ENCODE measurements at regions of chr11 and their contacts with region 1.

Region 1: GRCh38 chr11:72430741-72431570 is 3.4 kb downstream of the CLPB start:
- DNase-seq: peak; percentile 32
- H3K4me3 Mint-ChIP-seq: no peak overlapping the region
- H3K27ac Mint-ChIP-seq: peak overlapping the region; percentile 14
- H3K4me1 Mint-ChIP-seq: peaks cover 40% of the 10 kb centered on the region
- H3K27me3 Mint-ChIP-seq: no peaks in the 10 kb centered on the region

Region 2: DNA sequence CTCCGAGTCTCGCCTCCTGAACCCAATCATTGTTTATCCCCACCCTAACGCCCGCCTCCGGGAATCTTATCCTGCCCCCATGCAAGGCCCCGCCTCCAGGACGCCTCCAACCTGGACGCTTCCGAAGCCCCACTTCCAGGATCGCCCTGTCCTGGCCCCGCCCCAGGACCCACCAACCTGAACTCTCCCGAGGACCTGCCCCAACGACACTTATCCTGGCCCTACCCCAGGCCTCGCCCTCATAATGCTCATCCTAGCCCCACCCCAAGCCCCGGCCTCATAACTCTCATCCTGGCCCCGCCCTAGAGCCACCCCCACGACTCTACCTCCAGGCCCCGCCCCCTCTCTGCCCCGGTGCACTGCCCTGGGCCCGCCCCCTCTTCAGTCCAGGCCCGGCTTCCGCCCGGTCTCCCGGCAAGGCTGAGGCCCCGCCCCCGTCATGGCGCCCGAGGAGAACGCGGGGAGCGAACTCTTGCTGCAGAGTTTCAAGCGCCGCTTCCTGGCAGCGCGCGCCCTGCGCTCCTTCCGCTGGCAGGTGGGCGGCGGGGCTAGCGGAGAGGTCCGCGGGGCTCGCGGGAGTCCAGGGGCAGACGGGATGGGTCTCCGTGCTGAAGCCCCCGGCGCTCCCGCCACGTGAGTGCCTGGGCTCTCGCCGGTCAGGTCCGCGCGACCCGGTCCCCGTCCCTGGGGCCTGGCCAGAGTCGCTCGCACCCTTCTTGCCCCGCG is 643.7 kb before region 1 on chr11:
- intact Hi-C with region 1: loop called (anchors 1 kb)
- DNase-seq: peak; percentile 91
- H3K4me3 Mint-ChIP-seq: peak overlapping the region; percentile 97
- H3K27ac Mint-ChIP-seq: peak overlapping the region; percentile 97
- H3K4me1 Mint-ChIP-seq: peaks cover 23% of the 10 kb centered on the region
- H3K27me3 Mint-ChIP-seq: no peaks in the 10 kb centered on the region

Region 3: DNA sequence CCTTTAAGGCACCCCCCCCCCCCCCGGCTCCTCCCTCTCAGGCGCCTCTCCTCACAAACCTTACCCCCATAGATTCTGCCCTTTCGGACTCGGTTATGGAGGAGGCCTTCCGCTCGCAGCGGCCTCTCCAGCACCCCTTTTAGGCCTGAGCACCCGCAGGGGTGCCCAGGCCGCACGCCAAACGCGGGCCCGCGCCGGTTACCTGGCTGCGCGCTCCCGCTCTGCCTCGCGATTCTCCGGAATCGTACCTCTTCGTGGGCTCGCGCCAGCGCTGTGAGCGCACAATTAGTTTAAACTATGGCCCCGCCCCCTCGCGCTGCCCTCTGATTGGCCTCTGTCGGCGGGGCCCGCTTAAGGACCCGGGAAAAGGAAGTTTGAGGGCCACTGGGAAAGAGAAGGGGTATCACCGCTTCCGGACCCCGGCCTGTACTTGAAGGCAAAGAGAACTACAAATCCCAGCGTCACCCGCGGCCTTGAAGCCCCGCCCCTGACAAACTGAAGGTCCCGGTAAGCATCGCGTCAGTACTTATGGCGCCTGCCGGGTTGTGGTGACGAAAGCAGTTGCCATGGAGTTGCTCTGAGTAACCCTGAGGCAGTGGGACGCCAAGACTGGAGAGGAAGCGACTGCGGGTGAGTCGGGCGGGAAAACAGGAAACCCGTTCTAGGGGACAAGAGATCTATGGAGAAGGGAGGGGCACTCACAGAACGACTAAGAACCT is 350.5 kb before region 1 on chr11 and contains the starts of genes LRRC51 and NUMA1:
- intact Hi-C with region 1: loop called (anchors 1 kb)
- DNase-seq: peak; percentile 99
- H3K4me3 Mint-ChIP-seq: peak within 1 kb of the TSS; percentile 95
- H3K27ac Mint-ChIP-seq: peak within 1 kb of the TSS; percentile 93
- H3K4me1 Mint-ChIP-seq: peaks cover 49% of the 10 kb centered on the region
- H3K27me3 Mint-ChIP-seq: no peaks in the 10 kb centered on the region
- total RNA-seq, gene LRRC51: 5.7 and 8.2 TPM in 2 replicates
- total RNA-seq, gene NUMA1: 141 and 150 TPM in 2 replicates

Region 4: GRCh38 chr11:72179804-72180396 is 251.1 kb before region 1 on chr11:
- intact Hi-C with region 1: loop called (anchors 5 kb)
- DNase-seq: no peak
- H3K4me3 Mint-ChIP-seq: no peak overlapping the region
- H3K27ac Mint-ChIP-seq: no peak overlapping the region
- H3K4me1 Mint-ChIP-seq: peaks cover 5% of the 10 kb centered on the region
- H3K27me3 Mint-ChIP-seq: peaks cover 9% of the 10 kb centered on the region

Region 5: DNA sequence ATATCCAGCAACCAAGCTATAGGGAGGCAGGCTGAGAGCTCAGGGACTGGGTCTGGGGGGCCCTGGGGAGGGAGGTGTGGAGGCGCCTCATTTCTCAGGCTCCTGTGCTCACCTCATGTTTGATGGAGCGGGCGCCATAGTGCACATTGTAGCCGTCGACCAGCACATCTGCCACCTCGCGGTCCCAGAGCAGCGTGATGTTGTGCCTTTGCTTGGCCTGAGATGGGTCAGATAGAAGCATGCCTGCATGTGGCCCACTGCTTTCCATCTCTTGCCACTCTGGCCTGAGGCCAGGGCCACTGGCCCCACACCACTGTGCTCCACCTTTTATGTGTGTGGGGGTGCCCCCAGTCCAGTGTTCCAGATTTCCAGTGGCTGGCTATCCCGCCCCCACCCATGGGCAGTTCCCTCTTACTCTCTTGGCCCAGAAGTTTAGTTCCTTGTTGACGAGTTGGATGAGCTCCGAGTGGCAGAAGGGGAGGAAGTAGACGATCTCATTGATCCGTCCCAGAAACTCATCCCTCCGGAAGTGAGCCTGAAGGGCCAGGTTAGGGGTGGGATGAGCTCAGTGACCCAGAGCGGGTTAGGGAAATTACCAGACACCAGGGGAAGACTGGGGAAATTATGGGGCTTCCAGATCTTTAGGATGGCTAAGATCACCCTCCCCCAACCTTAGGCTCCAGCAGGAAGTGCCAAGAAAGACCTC is 136.9 kb before region 1 on chr11:
- intact Hi-C with region 1: loop called (anchors 1 kb)
- DNase-seq: no peak
- H3K4me3 Mint-ChIP-seq: no peak overlapping the region
- H3K27ac Mint-ChIP-seq: no peak overlapping the region
- H3K4me1 Mint-ChIP-seq: no peaks in the 10 kb centered on the region
- H3K27me3 Mint-ChIP-seq: no peaks in the 10 kb centered on the region

Region 6: GRCh38 chr11:72413914-72414628 is 16.9 kb before region 1 on chr11:
- intact Hi-C with region 1: loop called (anchors 2 kb)
- DNase-seq: peak; percentile 64
- H3K4me3 Mint-ChIP-seq: no peak overlapping the region
- H3K27ac Mint-ChIP-seq: no peak overlapping the region
- H3K4me1 Mint-ChIP-seq: peaks cover 31% of the 10 kb centered on the region
- H3K27me3 Mint-ChIP-seq: no peaks in the 10 kb centered on the region